Right ventricle myocardium inferior (tissue), 1 donor: ENCODE measurements at regions of chr4 and their contacts with region 1.

Region 1: DNA sequence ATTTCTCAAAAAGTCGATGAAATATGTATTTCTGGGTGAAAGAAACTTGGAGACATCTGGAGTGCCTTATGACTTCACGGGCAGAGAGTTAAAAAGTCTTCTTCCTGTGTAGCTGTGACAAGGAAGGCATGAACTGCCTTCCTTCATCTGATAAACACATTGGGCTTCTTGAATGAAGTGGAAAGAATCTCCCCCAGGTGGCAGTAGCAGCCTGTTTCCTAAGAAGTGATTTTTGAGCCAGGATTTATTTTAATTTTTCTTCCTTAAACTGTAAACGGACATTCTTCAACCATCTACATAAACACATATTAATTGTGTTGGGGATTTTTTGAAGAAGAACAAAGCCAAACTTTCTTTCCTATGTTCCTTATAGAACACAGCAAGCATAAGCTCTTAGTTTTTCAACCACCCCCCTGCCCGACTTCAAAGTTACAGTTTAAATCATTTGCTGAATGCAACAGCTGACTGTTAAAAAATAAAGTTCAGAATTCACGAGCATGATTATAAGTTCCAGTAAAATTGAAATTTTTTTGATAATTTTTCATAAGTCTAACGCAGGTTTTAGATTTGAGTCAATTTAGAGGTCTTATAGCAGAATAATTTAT is 980 bp upstream of the GIMD1 start:
- DNase-seq: no peak
- ATAC-seq: no peak

Region 2: GRCh38 chr4:106315968-106316772 is 53.4 kb before region 1 on chr4 and contains the starts of genes AIMP1 and TBCK:
- intact Hi-C with region 1: loop called (anchors 5 kb)
- DNase-seq: peak; percentile 93
- ATAC-seq: peak; percentile 98
- total RNA-seq, gene AIMP1: 34.9 TPM
- total RNA-seq, gene TBCK: 19.8 TPM

Region 3: DNA sequence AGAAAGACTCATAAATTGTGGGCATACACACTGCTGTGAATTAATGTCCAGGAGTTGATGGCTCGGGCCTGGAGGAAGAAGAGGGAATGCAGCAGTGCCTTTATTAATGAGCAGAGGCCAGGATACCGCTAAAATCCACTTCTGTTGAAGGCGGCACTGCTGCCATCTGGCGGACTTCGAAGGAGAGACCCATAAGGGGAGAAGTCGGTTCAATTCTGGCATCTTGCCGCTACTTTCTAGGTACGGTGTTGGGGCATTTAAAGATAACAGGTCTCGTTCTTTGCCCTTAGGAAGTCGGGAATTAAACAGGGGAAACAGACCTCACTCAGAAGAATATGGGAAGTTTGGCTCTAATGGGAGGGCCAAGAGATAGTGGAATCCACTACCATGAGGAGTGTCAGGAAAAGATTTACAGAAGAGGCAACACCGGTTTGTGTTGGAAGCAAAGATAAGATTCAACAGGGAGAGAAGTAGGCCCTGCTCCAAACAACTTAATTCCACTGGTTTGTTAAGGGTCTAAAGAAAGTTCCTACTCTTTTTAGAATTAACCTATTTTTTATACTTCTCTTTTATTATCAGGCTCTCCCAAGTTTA is 132.6 kb after region 1 on chr4:
- intact Hi-C with region 1: loop called (anchors 5 kb)
- DNase-seq: no peak
- ATAC-seq: no peak